ENCODE measurements at regions of chr3 and their contacts with region 1.

Region 1: GRCh38 chr3:141441381-141442364 is 45.2 kb upstream of the RASA2 start:
- DNase-seq: peak; percentile 29 to 68 (median 64)
- ATAC-seq: peak; percentile 97
- H3K4me3 ChIP-seq: no peak overlapping the region
- H3K4me3 Mint-ChIP-seq: no peak overlapping the region
- H3K27ac ChIP-seq: no peak overlapping the region
- H3K27ac Mint-ChIP-seq: peak overlapping the region in 6 of 9 donors; percentile 14 to 79 (median 42)
- H3K4me1 ChIP-seq: peaks cover 0 to 13% of the 10 kb centered on the region in 2 donors
- H3K4me1 Mint-ChIP-seq: peaks cover 9 to 24% (median 24%) of the 10 kb centered on the region in 7 donors
- H3K27me3 ChIP-seq: no peaks in the 10 kb centered on the region
- H3K27me3 Mint-ChIP-seq: no peaks in the 10 kb centered on the region

Region 2: DNA sequence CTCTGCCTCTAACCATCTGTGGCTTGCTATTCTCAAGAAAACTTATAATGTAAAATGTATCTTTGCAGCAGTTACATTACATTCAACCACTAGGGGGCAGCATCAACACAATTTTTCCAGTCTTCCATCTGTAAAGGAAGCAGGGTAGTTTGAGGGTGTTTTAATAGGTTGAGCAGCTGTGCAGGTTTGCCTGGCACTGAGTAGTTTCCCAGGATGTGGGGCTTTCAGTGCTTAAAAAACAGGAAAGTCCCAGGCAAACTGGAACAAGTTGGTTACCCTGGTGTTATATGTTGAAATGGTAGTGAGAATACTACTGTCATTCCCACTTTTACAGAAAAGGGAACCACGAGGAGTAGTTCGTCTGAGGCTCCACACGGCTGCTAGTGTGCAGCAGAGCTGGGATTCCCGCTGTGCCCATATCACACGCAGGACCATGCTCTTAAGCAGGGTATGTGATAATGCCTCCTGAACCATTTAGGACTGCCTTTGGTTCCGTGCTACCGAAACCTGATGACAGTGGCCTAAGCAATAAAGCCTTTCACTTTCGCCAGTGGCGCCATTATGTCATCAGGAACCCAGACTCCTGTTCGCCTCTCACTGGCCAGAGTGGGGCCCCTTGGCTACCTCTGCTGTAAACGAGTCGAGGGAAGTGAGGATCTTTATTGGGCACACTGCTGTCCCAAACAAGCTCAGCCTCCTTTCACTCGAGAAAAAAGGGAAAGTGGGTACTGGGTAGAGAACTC is 138.0 kb before region 1 on chr3:
- CTCF ChIA-PET with region 1: interaction called, 31 read pairs
- POLR2A ChIA-PET with region 1: interaction called, 6 read pairs
- intact Hi-C with region 1: loop called in 1 of 2 experiments (anchors 1 kb)
- DNase-seq: peak in 7 of 9 donors; percentile 62 to 84 (median 77)
- ATAC-seq: peak; percentile 77
- H3K4me3 ChIP-seq: no peak overlapping the region
- H3K4me3 Mint-ChIP-seq: peak overlapping the region in 1 of 10 donors; percentile 3
- H3K27ac ChIP-seq: no peak overlapping the region
- H3K27ac Mint-ChIP-seq: peak overlapping the region in 5 of 9 donors; percentile 4 to 84 (median 50)
- H3K4me1 ChIP-seq: peaks cover 20 to 57% of the 10 kb centered on the region in 2 donors
- H3K4me1 Mint-ChIP-seq: peaks cover 30 to 90% (median 80%) of the 10 kb centered on the region in 7 donors
- H3K27me3 ChIP-seq: no peaks in the 10 kb centered on the region
- H3K27me3 Mint-ChIP-seq: peaks cover 0 to 5% (median 0%) of the 10 kb centered on the region in 5 donors

Region 3: DNA sequence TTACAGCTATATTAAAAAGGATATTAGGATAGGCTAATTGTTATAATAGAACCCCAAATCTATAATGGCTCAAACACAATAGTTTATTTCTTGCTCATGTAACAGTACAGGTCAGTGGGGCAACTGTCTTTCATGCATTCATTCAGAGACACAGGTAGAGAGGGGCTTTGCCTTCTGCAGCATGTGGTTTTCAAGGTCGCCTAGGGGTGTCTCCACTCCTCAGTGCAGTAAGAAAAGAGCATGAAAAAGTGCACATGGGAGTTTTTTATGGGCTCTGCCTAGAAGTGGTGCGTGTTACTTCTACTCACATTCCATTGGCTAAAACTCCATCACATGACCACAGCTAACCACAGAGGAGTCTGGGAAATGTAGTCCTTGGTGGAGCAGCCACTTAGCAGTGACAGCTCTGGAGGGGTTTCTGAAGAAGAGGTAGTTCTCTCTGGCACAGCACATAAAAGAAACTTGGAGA is 71.6 kb before region 1 on chr3:
- CTCF ChIA-PET with region 1: interaction called, 15 read pairs
- POLR2A ChIA-PET with region 1: no interaction called
- intact Hi-C with region 1: loop called (anchors 1 kb)
- DNase-seq: peak; percentile 17 to 90 (median 81)
- ATAC-seq: peak; percentile 99
- H3K4me3 ChIP-seq: no peak overlapping the region
- H3K4me3 Mint-ChIP-seq: no peak overlapping the region
- H3K27ac ChIP-seq: no peak overlapping the region
- H3K27ac Mint-ChIP-seq: peak overlapping the region in 6 of 9 donors; percentile 13 to 76 (median 46)
- H3K4me1 ChIP-seq: no peaks in the 10 kb centered on the region
- H3K4me1 Mint-ChIP-seq: peaks cover 4 to 17% (median 7%) of the 10 kb centered on the region in 7 donors
- H3K27me3 ChIP-seq: no peaks in the 10 kb centered on the region
- H3K27me3 Mint-ChIP-seq: peaks cover 0 to 3% (median 0%) of the 10 kb centered on the region in 5 donors

Region 4: GRCh38 chr3:141412087-141412935 is 29.4 kb before region 1 on chr3:
- CTCF ChIA-PET with region 1: interaction called, 4 read pairs
- POLR2A ChIA-PET with region 1: interaction called, 8 read pairs
- intact Hi-C with region 1: loop called (anchors 1 to 2 kb)
- DNase-seq: peak in 7 of 9 donors; percentile 54 to 76 (median 69)
- ATAC-seq: peak; percentile 78
- H3K4me3 ChIP-seq: peak overlapping the region; percentile 26
- H3K4me3 Mint-ChIP-seq: peak overlapping the region; percentile 62 to 91 (median 86)
- H3K27ac ChIP-seq: peak overlapping the region; percentile 83
- H3K27ac Mint-ChIP-seq: peak overlapping the region; percentile 96 to 100 (median 99)
- H3K4me1 ChIP-seq: peaks cover 59 to 74% of the 10 kb centered on the region in 2 donors
- H3K4me1 Mint-ChIP-seq: peaks cover 52 to 87% (median 74%) of the 10 kb centered on the region in 7 donors
- H3K27me3 ChIP-seq: no peaks in the 10 kb centered on the region
- H3K27me3 Mint-ChIP-seq: no peaks in the 10 kb centered on the region

Region 5: GRCh38 chr3:141452036-141452435 is 10.4 kb after region 1 on chr3:
- CTCF ChIA-PET with region 1: interaction called, 33 read pairs
- POLR2A ChIA-PET with region 1: interaction called, 7 read pairs
- intact Hi-C with region 1: loop called in 1 of 2 experiments (anchors 1 kb)
- DNase-seq: peak in 7 of 9 donors; percentile 45 to 78 (median 64)
- ATAC-seq: peak; percentile 90
- H3K4me3 ChIP-seq: no peak overlapping the region
- H3K4me3 Mint-ChIP-seq: no peak overlapping the region
- H3K27ac ChIP-seq: peak overlapping the region; percentile 10
- H3K27ac Mint-ChIP-seq: no peak overlapping the region
- H3K4me1 ChIP-seq: peaks cover 0 to 10% of the 10 kb centered on the region in 2 donors
- H3K4me1 Mint-ChIP-seq: peaks cover 6 to 20% (median 12%) of the 10 kb centered on the region in 7 donors
- H3K27me3 ChIP-seq: no peaks in the 10 kb centered on the region
- H3K27me3 Mint-ChIP-seq: no peaks in the 10 kb centered on the region

Region 6: GRCh38 chr3:142716102-142716501 is 1274.4 kb after region 1 on chr3:
- CTCF ChIA-PET with region 1: no interaction called
- POLR2A ChIA-PET with region 1: no interaction called
- intact Hi-C with region 1: no loop called
- DNase-seq: no peak
- ATAC-seq: no peak
- H3K4me3 ChIP-seq: no peak overlapping the region
- H3K4me3 Mint-ChIP-seq: no peak overlapping the region
- H3K27ac ChIP-seq: no peak overlapping the region
- H3K27ac Mint-ChIP-seq: no peak overlapping the region
- H3K4me1 ChIP-seq: no peaks in the 10 kb centered on the region
- H3K4me1 Mint-ChIP-seq: no peaks in the 10 kb centered on the region
- H3K27me3 ChIP-seq: peaks cover 0 to 2% of the 10 kb centered on the region in 2 donors
- H3K27me3 Mint-ChIP-seq: peaks cover 27 to 54% (median 35%) of the 10 kb centered on the region in 5 donors

Measured in naive thymus-derived CD4-positive, alpha-beta T cell (primary cell).